ENCODE measurements at regions of chr17 and their contacts with region 1.

Region 1: DNA sequence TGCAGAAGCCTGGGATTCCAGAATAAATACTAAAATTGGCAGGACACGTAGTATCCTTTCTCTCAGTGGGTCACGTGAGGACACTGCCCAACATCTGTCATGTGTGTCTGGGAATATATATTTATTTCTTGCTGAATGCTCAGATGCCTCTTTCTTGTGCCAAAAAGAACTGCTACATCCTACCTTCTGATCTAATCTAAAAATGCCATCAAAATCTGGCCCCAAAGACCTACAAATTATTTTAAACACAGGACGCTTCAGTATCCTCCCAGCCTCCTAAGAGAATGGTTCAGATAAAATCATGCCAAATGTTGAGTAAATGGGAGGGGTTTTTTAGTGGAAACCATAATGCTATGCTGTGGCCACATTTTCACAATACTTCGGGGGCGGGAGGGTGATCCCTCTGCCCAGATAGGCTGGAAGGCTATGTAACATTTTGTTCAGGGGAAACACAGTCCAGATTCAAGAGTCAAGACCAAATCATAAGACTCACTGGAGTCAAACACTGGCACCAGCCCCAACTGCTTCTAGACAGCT is 22.9 kb upstream of the CORO6 start:
- DNase-seq: no peak
- ATAC-seq: no peak
- H3K4me3 ChIP-seq: no peak overlapping the region
- H3K27ac ChIP-seq: no peak overlapping the region
- H3K4me1 ChIP-seq: peaks cover 25% of the 10 kb centered on the region
- CTCF ChIP-seq: no peak
- EP300 ChIP-seq: no peak
- POLR2A ChIP-seq: no peak
- RAD21 ChIP-seq: no peak

Region 2: DNA sequence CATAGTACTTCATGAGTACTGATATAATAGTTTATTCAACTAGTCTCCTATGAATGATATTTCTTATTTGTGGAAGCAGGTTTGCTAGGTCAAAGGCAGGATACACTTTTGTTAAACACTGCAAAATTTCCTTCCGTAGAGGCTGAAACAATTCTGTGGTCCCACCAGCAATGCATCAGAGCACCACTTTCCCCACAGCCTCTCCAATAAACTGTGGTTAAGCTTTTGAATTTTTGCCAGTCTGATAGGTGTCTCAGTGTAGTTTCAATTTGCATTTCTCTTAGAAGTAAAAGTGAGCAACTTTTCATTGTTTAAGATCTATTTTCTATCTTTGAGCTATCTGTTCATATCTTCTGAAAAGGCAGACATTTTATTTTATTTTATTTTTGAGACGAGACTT is 13.6 kb after region 1 on chr17:
- CTCF ChIA-PET with region 1: interaction called, 91 read pairs
- POLR2A ChIA-PET with region 1: no interaction called
- DNase-seq: no peak
- ATAC-seq: no peak
- H3K4me3 ChIP-seq: no peak overlapping the region
- H3K27ac ChIP-seq: no peak overlapping the region
- H3K4me1 ChIP-seq: peaks cover 17% of the 10 kb centered on the region
- CTCF ChIP-seq: no peak
- EP300 ChIP-seq: no peak
- POLR2A ChIP-seq: no peak
- RAD21 ChIP-seq: no peak

Measured in A549 (cell line).